ENCODE measurements at regions of chr3 and their contacts with region 1.

Region 1: GRCh38 chr3:179589143-179589542 is 15.3 kb downstream of the MRPL47 start:
- DNase-seq: no peak
- H3K4me3 ChIP-seq: no peak overlapping the region
- CTCF ChIP-seq: no peak
- POLR2A ChIP-seq: no peak

Region 2: GRCh38 chr3:179565496-179565895 is 23.6 kb before region 1 on chr3:
- intact Hi-C with region 1: loop called (anchors 1 kb)
- DNase-seq: no peak
- H3K4me3 ChIP-seq: no peak overlapping the region
- CTCF ChIP-seq: no peak
- POLR2A ChIP-seq: no peak